Esophagus muscularis mucosa (tissue), 4 donors: ENCODE measurements at regions of chr14 and their contacts with region 1.

Region 1: GRCh38 chr14:96100161-96101029 is 61.2 kb downstream of the C14orf132 start:
- DNase-seq: peak; percentile 95
- H3K4me3 ChIP-seq: no peak overlapping the region
- H3K27ac ChIP-seq: peak overlapping the region in 1 of 4 donors; percentile 22
- H3K4me1 ChIP-seq: peaks cover 0 to 36% (median 31%) of the 10 kb centered on the region in 4 donors
- H3K27me3 ChIP-seq: peaks cover 0 to 24% (median 0%) of the 10 kb centered on the region in 4 donors
- CTCF ChIP-seq: peak; percentile 88 to 97 (median 90)
- EP300 ChIP-seq: no peak
- POLR2A ChIP-seq: no peak

Region 2: GRCh38 chr14:95561001-95561412 is 539.4 kb before region 1 on chr14:
- intact Hi-C with region 1: loop called (anchors 10 kb)
- DNase-seq: peak; percentile 94
- H3K4me3 ChIP-seq: no peak overlapping the region
- H3K27ac ChIP-seq: no peak overlapping the region
- H3K4me1 ChIP-seq: peaks cover 0 to 10% (median 4%) of the 10 kb centered on the region in 4 donors
- H3K27me3 ChIP-seq: peaks cover 0 to 3% (median 0%) of the 10 kb centered on the region in 4 donors
- CTCF ChIP-seq: peak; percentile 86 to 93 (median 92)
- EP300 ChIP-seq: no peak
- POLR2A ChIP-seq: no peak

Region 3: GRCh38 chr14:95993768-95994592 is 106.4 kb before region 1 on chr14:
- intact Hi-C with region 1: loop called (anchors 2 kb)
- DNase-seq: no peak
- H3K4me3 ChIP-seq: no peak overlapping the region
- H3K27ac ChIP-seq: no peak overlapping the region
- H3K4me1 ChIP-seq: no peaks in the 10 kb centered on the region
- H3K27me3 ChIP-seq: peaks cover 0 to 25% (median 3%) of the 10 kb centered on the region in 4 donors
- CTCF ChIP-seq: peak; percentile 72 to 81 (median 81)
- EP300 ChIP-seq: no peak
- POLR2A ChIP-seq: no peak

Region 4: GRCh38 chr14:96204151-96205058 is 104.0 kb after region 1 on chr14 and contains the start of gene BDKRB2:
- intact Hi-C with region 1: loop called (anchors 10 kb)
- DNase-seq: no peak
- H3K4me3 ChIP-seq: peak within 1 kb of the TSS; percentile 53 to 68 (median 58)
- H3K27ac ChIP-seq: peak within 1 kb of the TSS; percentile 78 to 85 (median 78)
- H3K4me1 ChIP-seq: peaks cover 14 to 51% (median 37%) of the 10 kb centered on the region in 4 donors
- H3K27me3 ChIP-seq: no peaks in the 10 kb centered on the region
- CTCF ChIP-seq: no peak
- EP300 ChIP-seq: no peak
- POLR2A ChIP-seq: peak; percentile 68
- total RNA-seq, gene BDKRB2: 5.8 to 16.1 (median 10.0) TPM

Region 5: GRCh38 chr14:96275177-96276112 is 175.1 kb after region 1 on chr14:
- intact Hi-C with region 1: loop called (anchors 1 kb)
- DNase-seq: peak; percentile 91
- H3K4me3 ChIP-seq: no peak overlapping the region
- H3K27ac ChIP-seq: peak overlapping the region; percentile 27 to 56 (median 45)
- H3K4me1 ChIP-seq: peaks cover 0 to 19% (median 15%) of the 10 kb centered on the region in 4 donors
- H3K27me3 ChIP-seq: no peaks in the 10 kb centered on the region
- CTCF ChIP-seq: peak; percentile 91 to 96 (median 94)
- EP300 ChIP-seq: no peak
- POLR2A ChIP-seq: no peak

Region 6: GRCh38 chr14:96424109-96424989 is 324.0 kb after region 1 on chr14:
- intact Hi-C with region 1: loop called (anchors 5 kb)
- DNase-seq: no peak
- H3K4me3 ChIP-seq: peak overlapping the region; percentile 48 to 52 (median 48)
- H3K27ac ChIP-seq: no peak overlapping the region
- H3K4me1 ChIP-seq: peaks cover 0 to 11% (median 9%) of the 10 kb centered on the region in 4 donors
- H3K27me3 ChIP-seq: peaks cover 0 to 9% (median 2%) of the 10 kb centered on the region in 4 donors
- CTCF ChIP-seq: peak; percentile 68 to 81 (median 71)
- EP300 ChIP-seq: no peak
- POLR2A ChIP-seq: no peak